ENCODE measurements at regions of chrX and their contacts with region 1.

Region 1: DNA sequence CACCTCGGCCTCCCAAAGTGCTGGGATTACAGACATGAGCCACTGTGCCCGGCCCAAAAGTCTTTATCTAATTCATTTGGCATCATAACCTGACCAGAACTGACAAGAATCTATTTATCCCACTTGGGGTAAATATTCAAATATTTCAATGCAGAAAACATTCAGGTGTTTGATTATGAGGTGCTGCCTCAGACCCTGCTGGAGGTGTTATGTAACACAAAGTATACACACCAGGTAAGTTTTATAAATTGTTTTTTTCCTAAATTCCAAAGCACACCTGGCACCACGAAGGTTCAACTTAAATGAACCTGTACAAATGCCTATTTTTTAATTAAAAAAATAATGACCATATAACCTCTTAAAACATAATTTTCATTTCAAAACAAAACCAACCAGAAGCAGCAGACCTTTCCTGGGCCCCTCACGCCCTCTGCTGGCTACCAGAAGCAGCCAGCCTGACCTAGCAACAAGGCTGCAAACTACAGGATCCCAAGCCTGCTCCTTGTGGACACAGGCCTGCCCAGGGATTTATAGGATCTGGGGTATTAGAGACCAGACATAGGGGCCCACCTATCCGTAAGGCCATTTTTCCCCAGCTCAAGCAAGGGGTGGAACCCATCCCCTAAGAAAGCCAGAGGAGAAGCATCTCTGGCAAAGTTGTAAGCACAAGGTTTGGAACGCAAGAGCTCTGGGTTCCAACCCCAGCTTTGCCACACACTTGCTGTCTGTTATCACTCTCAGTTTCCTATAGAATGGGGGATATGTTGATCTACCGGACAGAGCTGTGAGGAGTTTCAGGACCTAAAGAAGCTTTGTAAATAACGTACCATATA is 11.7 kb downstream of the OTUD5 start:
- DNase-seq: peak; percentile 62
- H3K4me3 Mint-ChIP-seq: no peak overlapping the region
- H3K27ac Mint-ChIP-seq: no peak overlapping the region
- H3K4me1 Mint-ChIP-seq: no peaks in the 10 kb centered on the region
- H3K27me3 Mint-ChIP-seq: no peaks in the 10 kb centered on the region
- CTCF ChIP-seq: peak; percentile 66

Region 2: DNA sequence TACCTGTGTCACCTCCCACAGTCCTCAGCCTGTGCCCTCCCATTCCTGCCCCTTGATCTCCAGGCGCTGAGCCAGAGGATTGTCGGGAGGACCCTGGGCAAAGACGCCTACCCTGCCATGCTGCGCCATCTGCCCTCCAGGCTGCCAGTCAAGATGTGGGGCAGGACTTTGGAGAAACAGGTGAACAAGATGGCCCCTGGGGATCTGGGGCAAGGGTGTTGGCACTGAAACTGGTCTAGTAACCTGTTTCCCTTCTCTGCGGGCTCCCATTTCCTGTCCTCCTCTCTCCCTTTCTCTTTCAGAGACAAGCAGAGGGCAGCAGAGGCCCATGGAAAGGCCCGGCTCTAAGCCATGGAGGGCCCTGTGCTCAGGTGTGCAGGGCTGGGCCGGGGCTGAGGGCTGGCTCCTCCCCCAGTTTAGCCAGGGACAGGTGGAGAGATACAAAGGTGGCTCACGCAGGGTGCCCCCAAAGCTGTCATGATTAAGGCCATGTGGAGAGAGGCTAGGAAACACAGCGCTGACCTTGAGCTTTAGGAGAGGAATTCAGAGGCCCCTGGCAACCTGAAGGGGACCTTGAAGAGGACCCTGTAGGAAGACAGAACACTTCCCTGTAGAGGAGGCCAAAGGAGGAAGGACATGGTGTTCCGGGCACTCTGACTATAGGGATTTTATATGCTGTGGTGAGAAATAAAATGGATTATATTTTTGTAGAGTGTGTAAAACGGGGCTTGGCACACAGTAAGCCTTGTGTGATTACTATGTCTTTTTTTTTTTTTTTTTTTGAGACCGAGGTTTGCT is 183.9 kb before region 1 on chrX and contains the start of gene GLOD5:
- CTCF ChIA-PET with region 1: no interaction called
- intact Hi-C with region 1: loop called (anchors 10 kb)
- DNase-seq: peak; percentile 86
- H3K4me3 Mint-ChIP-seq: peak within 1 kb of the TSS; percentile 68
- H3K27ac Mint-ChIP-seq: peak within 1 kb of the TSS; percentile 99
- H3K4me1 Mint-ChIP-seq: peaks cover 12% of the 10 kb centered on the region
- H3K27me3 Mint-ChIP-seq: no peaks in the 10 kb centered on the region
- CTCF ChIP-seq: peak; percentile 37
- total RNA-seq, gene GLOD5: not detected in 2 replicates

Measured in Calu3 (cell line).